GM12878 (cell line): ENCODE measurements at regions of chr7 and their contacts with region 1.

Region 1: GRCh38 chr7:16071246-16071857 is 350.0 kb downstream of the CRPPA start:
- DNase-seq: no peak
- ATAC-seq: peak; percentile 85
- H3K4me3 ChIP-seq: no peak overlapping the region
- H3K27ac ChIP-seq: no peak overlapping the region
- H3K4me1 ChIP-seq: no peaks in the 10 kb centered on the region
- H3K27me3 ChIP-seq: no peaks in the 10 kb centered on the region
- CTCF ChIP-seq: peak; percentile 40 to 66 (median 65); a peak in 5 of 6 replicates
- EP300 ChIP-seq: no peak
- POLR2A ChIP-seq: no peak
- RAD21 ChIP-seq: peak; percentile 84

Region 2: GRCh38 chr7:14717816-14718215 is 1353.5 kb before region 1 on chr7:
- CTCF ChIA-PET with region 1: interaction called, 4 read pairs
- POLR2A ChIA-PET with region 1: no interaction called
- RAD21 ChIA-PET with region 1: no interaction called
- SMC1A ChIA-PET with region 1: no interaction called
- in situ Hi-C with region 1: loop called (anchors 25 kb)
- intact Hi-C with region 1: loop called (anchors 10 kb)
- DNase-seq: no peak
- ATAC-seq: no peak
- H3K4me3 ChIP-seq: no peak overlapping the region
- H3K27ac ChIP-seq: no peak overlapping the region
- H3K4me1 ChIP-seq: no peaks in the 10 kb centered on the region
- H3K27me3 ChIP-seq: peaks cover 0 to 3% of the 10 kb centered on the region in 2 experiments; a peak in 1 of 4 replicates
- CTCF ChIP-seq: peak in 2 of 3 experiments; percentile 7 to 12; a peak in 3 of 6 replicates
- EP300 ChIP-seq: no peak
- POLR2A ChIP-seq: no peak
- RAD21 ChIP-seq: peak; percentile 49

Region 3: DNA sequence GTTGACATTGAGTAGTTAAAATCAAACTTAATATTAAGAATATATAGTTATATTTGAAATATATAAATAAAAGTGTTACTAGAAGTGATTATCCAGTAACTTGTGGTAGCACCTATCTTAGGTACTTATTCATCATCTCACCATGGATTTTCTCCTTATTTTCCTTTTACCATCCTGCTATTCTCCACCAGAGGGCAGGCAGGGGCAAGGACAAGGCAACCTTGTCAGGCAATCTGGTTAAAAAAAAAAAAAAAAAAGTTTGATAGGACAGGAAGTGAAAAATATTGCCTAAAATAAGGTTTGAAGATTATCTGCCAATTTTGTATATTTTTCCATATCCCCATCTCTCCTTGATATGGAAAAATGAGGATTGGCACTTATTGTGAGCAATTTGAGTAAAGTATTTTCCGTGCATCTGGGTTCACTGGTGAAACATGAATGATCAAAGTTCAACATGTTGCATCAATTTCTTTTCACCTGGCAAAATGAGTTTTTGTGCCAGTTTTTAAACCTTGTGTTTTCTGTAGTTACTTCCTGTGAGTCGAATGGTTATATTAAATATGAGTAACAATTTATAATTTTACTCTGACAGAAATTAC is 766.3 kb before region 1 on chr7:
- CTCF ChIA-PET with region 1: interaction called, 3 read pairs
- POLR2A ChIA-PET with region 1: no interaction called
- RAD21 ChIA-PET with region 1: no interaction called
- SMC1A ChIA-PET with region 1: no interaction called
- in situ Hi-C with region 1: loop called (anchors 5 kb)
- intact Hi-C with region 1: loop called (anchors 1 kb)
- DNase-seq: no peak
- ATAC-seq: peak; percentile 68
- H3K4me3 ChIP-seq: no peak overlapping the region
- H3K27ac ChIP-seq: no peak overlapping the region
- H3K4me1 ChIP-seq: no peaks in the 10 kb centered on the region
- H3K27me3 ChIP-seq: no peaks in the 10 kb centered on the region
- CTCF ChIP-seq: peak; percentile 53 to 64 (median 64)
- EP300 ChIP-seq: no peak
- POLR2A ChIP-seq: no peak
- RAD21 ChIP-seq: peak; percentile 59

Region 4: GRCh38 chr7:15326044-15326644 is 745.2 kb before region 1 on chr7:
- CTCF ChIA-PET with region 1: interaction called, 4 read pairs
- POLR2A ChIA-PET with region 1: no interaction called
- RAD21 ChIA-PET with region 1: no interaction called
- SMC1A ChIA-PET with region 1: interaction called, 3 read pairs
- in situ Hi-C with region 1: no loop called
- intact Hi-C with region 1: loop called (anchors 2 kb)
- DNase-seq: no peak
- ATAC-seq: peak; percentile 62
- H3K4me3 ChIP-seq: no peak overlapping the region
- H3K27ac ChIP-seq: no peak overlapping the region
- H3K4me1 ChIP-seq: no peaks in the 10 kb centered on the region
- H3K27me3 ChIP-seq: no peaks in the 10 kb centered on the region
- CTCF ChIP-seq: peak; percentile 21 to 49 (median 28); a peak in 3 of 6 replicates
- EP300 ChIP-seq: no peak
- POLR2A ChIP-seq: no peak
- RAD21 ChIP-seq: peak; percentile 33

Region 5: GRCh38 chr7:16021851-16022250 is 49.5 kb before region 1 on chr7:
- CTCF ChIA-PET with region 1: no interaction called
- POLR2A ChIA-PET with region 1: no interaction called
- RAD21 ChIA-PET with region 1: no interaction called
- SMC1A ChIA-PET with region 1: no interaction called
- in situ Hi-C with region 1: no loop called
- intact Hi-C with region 1: no loop called
- DNase-seq: no peak
- ATAC-seq: no peak
- H3K4me3 ChIP-seq: no peak overlapping the region
- H3K27ac ChIP-seq: no peak overlapping the region
- H3K4me1 ChIP-seq: no peaks in the 10 kb centered on the region
- H3K27me3 ChIP-seq: no peaks in the 10 kb centered on the region
- CTCF ChIP-seq: no peak
- EP300 ChIP-seq: no peak
- POLR2A ChIP-seq: no peak
- RAD21 ChIP-seq: no peak

Region 6: DNA sequence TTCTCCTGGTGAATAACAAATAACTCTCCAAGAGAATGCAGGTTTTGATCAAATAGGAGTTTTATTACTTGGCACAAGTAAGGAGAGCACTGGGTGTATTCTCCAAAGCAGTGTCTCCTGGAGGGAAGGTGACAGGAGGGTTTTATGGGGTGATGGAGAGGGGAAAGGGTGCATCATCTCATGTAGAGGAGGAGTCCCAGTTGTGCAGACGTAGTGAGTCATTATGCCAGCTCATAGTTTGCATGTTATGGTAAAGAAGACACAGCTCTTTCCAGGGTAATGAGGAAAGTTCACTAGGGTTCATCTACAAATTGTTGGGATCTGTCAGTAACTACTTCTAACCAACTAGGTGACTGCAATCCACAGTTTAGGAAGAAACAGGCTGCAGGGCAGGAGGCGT is 37.0 kb before region 1 on chr7:
- CTCF ChIA-PET with region 1: no interaction called
- POLR2A ChIA-PET with region 1: no interaction called
- RAD21 ChIA-PET with region 1: no interaction called
- SMC1A ChIA-PET with region 1: no interaction called
- in situ Hi-C with region 1: no loop called
- intact Hi-C with region 1: no loop called
- DNase-seq: no peak
- ATAC-seq: no peak
- H3K4me3 ChIP-seq: no peak overlapping the region
- H3K27ac ChIP-seq: no peak overlapping the region
- H3K4me1 ChIP-seq: no peaks in the 10 kb centered on the region
- H3K27me3 ChIP-seq: no peaks in the 10 kb centered on the region
- CTCF ChIP-seq: no peak
- EP300 ChIP-seq: no peak
- POLR2A ChIP-seq: no peak
- RAD21 ChIP-seq: no peak

Region 7: DNA sequence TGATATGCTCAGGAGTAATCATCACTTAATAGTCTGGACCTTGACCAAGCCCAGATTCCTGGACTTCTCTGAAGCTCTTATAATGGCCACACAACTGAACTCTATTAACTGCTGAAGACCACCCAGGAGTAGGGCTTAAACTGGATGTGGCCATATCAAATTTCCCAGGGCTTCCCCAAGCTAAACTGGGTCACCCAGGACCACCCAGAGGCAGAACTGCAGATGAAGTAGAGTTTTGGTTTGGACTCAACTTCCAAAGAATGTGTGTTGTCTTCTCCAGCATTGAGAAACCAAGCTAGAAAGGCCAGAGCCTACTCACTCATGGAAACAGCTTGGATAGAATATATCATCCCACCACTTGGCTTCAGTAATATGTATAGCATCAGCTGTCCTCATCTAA is 26.7 kb before region 1 on chr7:
- CTCF ChIA-PET with region 1: no interaction called
- POLR2A ChIA-PET with region 1: no interaction called
- RAD21 ChIA-PET with region 1: no interaction called
- SMC1A ChIA-PET with region 1: no interaction called
- in situ Hi-C with region 1: no loop called
- intact Hi-C with region 1: no loop called
- DNase-seq: no peak
- ATAC-seq: no peak
- H3K4me3 ChIP-seq: no peak overlapping the region
- H3K27ac ChIP-seq: no peak overlapping the region
- H3K4me1 ChIP-seq: no peaks in the 10 kb centered on the region
- H3K27me3 ChIP-seq: no peaks in the 10 kb centered on the region
- CTCF ChIP-seq: no peak
- EP300 ChIP-seq: no peak
- POLR2A ChIP-seq: no peak
- RAD21 ChIP-seq: no peak

Region 8: GRCh38 chr7:16136896-16137295 is 65.5 kb after region 1 on chr7:
- CTCF ChIA-PET with region 1: no interaction called
- POLR2A ChIA-PET with region 1: no interaction called
- RAD21 ChIA-PET with region 1: no interaction called
- SMC1A ChIA-PET with region 1: no interaction called
- in situ Hi-C with region 1: no loop called
- intact Hi-C with region 1: no loop called
- DNase-seq: no peak
- ATAC-seq: no peak
- H3K4me3 ChIP-seq: no peak overlapping the region
- H3K27ac ChIP-seq: no peak overlapping the region
- H3K4me1 ChIP-seq: no peaks in the 10 kb centered on the region
- H3K27me3 ChIP-seq: no peaks in the 10 kb centered on the region
- CTCF ChIP-seq: no peak
- EP300 ChIP-seq: no peak
- POLR2A ChIP-seq: no peak
- RAD21 ChIP-seq: no peak